ENCODE measurements at regions of chr7 and their contacts with region 1.

Region 1: GRCh38 chr7:30504347-30505173 is at the start of gene GGCT:
- DNase-seq: peak; percentile 98 to 99 (median 98)
- H3K4me3 ChIP-seq: peak within 1 kb of the TSS; percentile 94
- H3K27ac ChIP-seq: peak within 1 kb of the TSS; percentile 37 to 82
- H3K4me1 ChIP-seq: peaks cover 6% of the 10 kb centered on the region
- H3K27me3 ChIP-seq: no peaks in the 10 kb centered on the region
- CTCF ChIP-seq: peak in 1 of 3 donors; percentile 16
- EP300 ChIP-seq: no peak
- POLR2A ChIP-seq: peak; percentile 55
- total RNA-seq, gene GGCT: 17.9 to 31.8 (median 22.0) TPM

Region 2: DNA sequence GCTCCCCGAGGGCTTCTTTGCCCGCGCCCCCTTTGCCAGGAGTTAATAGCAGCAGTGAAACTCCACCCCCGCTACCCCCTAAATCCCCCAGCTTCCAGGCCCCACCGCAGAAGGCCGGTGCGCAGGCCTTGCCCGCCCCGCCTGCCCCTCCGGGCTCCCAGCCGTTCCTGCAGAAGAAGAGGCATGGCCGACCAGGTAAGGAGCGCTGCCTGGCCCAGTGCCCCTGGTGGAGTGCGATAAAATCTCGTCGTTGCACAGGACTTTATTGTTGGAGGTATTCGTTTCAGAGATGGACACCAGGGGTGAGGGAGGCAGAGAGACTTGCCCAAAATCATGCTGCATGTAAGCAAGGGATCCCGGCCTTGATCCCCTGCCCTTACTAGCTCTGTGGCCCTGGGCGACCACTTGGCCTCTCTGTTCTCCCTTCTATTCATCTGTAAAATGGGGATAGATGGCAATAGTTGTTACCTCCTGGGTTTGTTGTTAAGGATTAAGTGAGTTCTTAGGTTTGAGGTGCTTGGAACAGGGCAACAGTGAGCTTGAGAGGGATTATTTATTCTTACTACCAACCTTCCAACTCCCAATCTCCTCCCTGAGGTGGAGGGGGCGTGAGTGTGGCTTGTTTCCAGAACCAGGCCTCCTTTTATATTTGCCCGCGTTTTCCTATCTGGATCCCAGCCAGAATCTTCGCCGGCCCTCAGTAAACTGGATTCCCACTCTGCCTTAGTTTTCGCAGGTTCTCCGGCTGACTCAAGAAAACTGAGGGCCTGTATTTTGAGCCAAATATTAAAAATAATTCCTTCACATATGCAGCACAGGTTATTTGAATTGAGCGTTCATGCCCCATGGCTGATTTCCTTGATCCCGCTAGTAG is 619.9 kb before region 1 on chr7:
- intact Hi-C with region 1: loop called in 1 of 4 experiments (anchors 5 kb)
- DNase-seq: peak in 2 of 5 donors; percentile 48 to 60
- H3K4me3 ChIP-seq: peak overlapping the region; percentile 26
- H3K27ac ChIP-seq: no peak overlapping the region
- H3K4me1 ChIP-seq: peaks cover 8% of the 10 kb centered on the region
- H3K27me3 ChIP-seq: no peaks in the 10 kb centered on the region
- CTCF ChIP-seq: no peak
- EP300 ChIP-seq: no peak
- POLR2A ChIP-seq: no peak

Region 3: DNA sequence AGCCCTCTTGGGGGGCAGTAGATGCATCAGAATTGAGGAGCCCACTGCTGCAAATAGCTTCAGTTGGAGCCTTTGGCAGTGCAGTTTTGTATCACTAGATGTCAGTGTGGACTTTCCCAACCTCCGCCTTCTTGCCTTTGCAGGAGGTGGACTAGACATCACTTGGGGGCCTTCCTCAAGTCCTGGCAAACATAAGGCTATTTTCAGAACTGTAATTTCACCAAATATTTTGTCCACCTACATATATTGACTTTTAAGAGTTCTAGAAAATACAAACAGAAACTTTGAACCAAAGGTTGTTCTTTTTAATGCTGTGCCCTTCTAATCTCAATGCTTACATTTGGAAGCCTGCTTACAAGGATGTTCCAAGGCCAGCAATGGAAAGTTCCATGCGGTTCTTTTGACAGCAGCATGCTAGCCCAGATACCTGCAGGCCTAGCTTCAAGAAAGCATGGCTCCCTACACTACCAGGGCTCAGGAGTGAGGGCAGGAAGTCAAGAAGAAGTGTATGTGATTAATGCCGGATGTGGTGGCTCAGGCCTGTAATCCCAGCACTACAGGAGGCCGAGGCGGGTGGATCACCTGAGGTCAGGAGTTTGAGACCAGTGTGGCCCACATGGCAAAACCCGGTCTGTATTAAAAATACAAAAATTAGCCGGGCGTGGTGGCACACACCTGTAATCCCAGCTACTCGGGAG is 228.2 kb before region 1 on chr7:
- intact Hi-C with region 1: no loop called
- DNase-seq: peak; percentile 23 to 51 (median 41)
- H3K4me3 ChIP-seq: no peak overlapping the region
- H3K27ac ChIP-seq: no peak overlapping the region
- H3K4me1 ChIP-seq: no peaks in the 10 kb centered on the region
- H3K27me3 ChIP-seq: no peaks in the 10 kb centered on the region
- CTCF ChIP-seq: peak; percentile 44 to 57 (median 49)
- EP300 ChIP-seq: no peak
- POLR2A ChIP-seq: no peak